ENCODE measurements at regions of chr3 and their contacts with region 1.

Region 1: GRCh38 chr3:141370065-141370533 is 1.8 kb downstream of the ZBTB38 start:
- DNase-seq: peak; percentile 82 to 88 (median 84)
- H3K4me3 ChIP-seq: no peak overlapping the region
- H3K4me3 Mint-ChIP-seq: no peak overlapping the region
- H3K27ac ChIP-seq: no peak overlapping the region
- H3K27ac Mint-ChIP-seq: peak overlapping the region in 6 of 7 donors; percentile 30 to 90 (median 58)
- H3K4me1 ChIP-seq: no peaks in the 10 kb centered on the region
- H3K4me1 Mint-ChIP-seq: peaks cover 5 to 11% (median 8%) of the 10 kb centered on the region in 4 donors
- H3K27me3 ChIP-seq: no peaks in the 10 kb centered on the region
- H3K27me3 Mint-ChIP-seq: no peaks in the 10 kb centered on the region

Region 2: GRCh38 chr3:141426404-141427034 is 56.4 kb after region 1 on chr3:
- CTCF ChIA-PET with region 1: interaction called, 24 read pairs
- POLR2A ChIA-PET with region 1: interaction called, 3 read pairs
- intact Hi-C with region 1: no loop called
- DNase-seq: no peak
- H3K4me3 ChIP-seq: no peak overlapping the region
- H3K4me3 Mint-ChIP-seq: no peak overlapping the region
- H3K27ac ChIP-seq: no peak overlapping the region
- H3K27ac Mint-ChIP-seq: peak overlapping the region in 6 of 7 donors; percentile 16 to 74 (median 50)
- H3K4me1 ChIP-seq: peaks cover 27% of the 10 kb centered on the region
- H3K4me1 Mint-ChIP-seq: peaks cover 8 to 48% (median 35%) of the 10 kb centered on the region in 4 donors
- H3K27me3 ChIP-seq: no peaks in the 10 kb centered on the region
- H3K27me3 Mint-ChIP-seq: no peaks in the 10 kb centered on the region

Measured in CD4-positive, alpha-beta memory T cell (primary cell).